ENCODE measurements at regions of chr6 and their contacts with region 1.

Region 1: GRCh38 chr6:37489660-37490361 is 9.9 kb downstream of the CCDC167 start:
- DNase-seq: peak; percentile 42
- ATAC-seq: no peak
- H3K4me3 Mint-ChIP-seq: no peak overlapping the region
- H3K27ac Mint-ChIP-seq: peak overlapping the region; percentile 58
- H3K4me1 Mint-ChIP-seq: peaks cover 67% of the 10 kb centered on the region
- H3K27me3 Mint-ChIP-seq: no peaks in the 10 kb centered on the region

Region 2: DNA sequence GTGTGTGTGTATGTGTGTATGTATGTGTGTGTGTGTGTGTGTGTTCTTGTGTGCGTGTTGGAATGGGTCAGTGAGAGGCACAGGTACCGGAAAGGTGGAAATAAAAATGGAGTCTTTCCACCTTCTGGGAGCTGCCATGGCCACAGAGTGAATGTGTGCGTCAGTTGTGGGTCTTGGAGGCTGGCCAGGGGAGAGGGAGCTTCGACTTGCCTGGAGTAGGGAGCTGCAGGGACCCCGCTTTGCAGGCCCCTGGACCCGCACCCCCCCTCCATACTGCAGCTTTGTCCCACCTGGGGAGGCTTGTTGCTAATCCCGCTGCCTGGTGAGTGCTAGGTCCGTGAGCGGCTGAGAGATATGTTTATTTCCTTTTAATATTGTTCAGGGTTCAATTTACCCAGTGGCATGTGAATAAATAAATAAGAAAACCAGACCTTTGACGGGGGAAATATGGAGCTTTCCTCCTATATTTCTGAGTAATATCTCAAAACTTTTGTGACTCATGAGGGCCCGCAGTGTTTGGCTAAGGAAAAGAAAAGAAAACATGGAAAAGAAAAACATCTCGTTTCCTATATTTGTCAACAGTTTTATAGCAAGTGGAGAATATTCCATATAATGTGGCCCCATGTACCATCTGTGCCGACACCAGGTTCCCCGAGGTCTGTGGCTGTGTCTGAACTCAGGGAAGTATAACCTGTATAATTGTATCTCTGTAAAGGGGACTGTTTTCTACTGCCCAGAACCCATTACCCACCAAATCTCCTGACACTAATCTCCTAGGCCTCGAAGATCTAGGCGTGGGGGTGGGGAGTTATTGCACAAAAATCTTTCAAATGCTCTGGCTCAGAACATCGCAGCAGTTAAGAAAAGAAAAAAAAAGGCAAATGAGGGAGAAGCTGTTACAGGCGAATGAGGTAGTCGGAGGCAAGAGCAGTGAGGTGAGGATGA is 34.5 kb after region 1 on chr6:
- CTCF ChIA-PET with region 1: interaction called, 5 read pairs
- POLR2A ChIA-PET with region 1: no interaction called
- intact Hi-C with region 1: loop called in 1 of 2 experiments (anchors 5 kb)
- DNase-seq: no peak
- ATAC-seq: no peak
- H3K4me3 Mint-ChIP-seq: no peak overlapping the region
- H3K27ac Mint-ChIP-seq: no peak overlapping the region
- H3K4me1 Mint-ChIP-seq: peaks cover 55% of the 10 kb centered on the region
- H3K27me3 Mint-ChIP-seq: no peaks in the 10 kb centered on the region

Region 3: GRCh38 chr6:37550191-37550965 is 60.6 kb after region 1 on chr6:
- CTCF ChIA-PET with region 1: interaction called, 4 read pairs
- POLR2A ChIA-PET with region 1: interaction called, 10 read pairs
- intact Hi-C with region 1: loop called in 1 of 2 experiments (anchors 1 kb)
- DNase-seq: no peak
- ATAC-seq: no peak
- H3K4me3 Mint-ChIP-seq: no peak overlapping the region
- H3K27ac Mint-ChIP-seq: no peak overlapping the region
- H3K4me1 Mint-ChIP-seq: peaks cover 47% of the 10 kb centered on the region
- H3K27me3 Mint-ChIP-seq: peaks cover 2% of the 10 kb centered on the region

Measured in activated CD4-positive, alpha-beta T cell treated with anti-CD3 and anti-CD28 coated beads for 36 hours (primary cell).